ENCODE measurements at regions of chr1 and their contacts with region 1.

Region 1: GRCh38 chr1:161225534-161226319 is at the start of gene TOMM40L:
- DNase-seq: peak; percentile 100
- H3K4me3 ChIP-seq: peak within 1 kb of the TSS; percentile 97
- H3K27ac ChIP-seq: no peak within 1 kb of the TSS
- H3K27me3 ChIP-seq: no peaks in the 10 kb centered on the region
- CTCF ChIP-seq: peak; percentile 76
- polyA plus RNA-seq, gene TOMM40L: 9.3 and 9.9 TPM in 2 replicates

Region 2: DNA sequence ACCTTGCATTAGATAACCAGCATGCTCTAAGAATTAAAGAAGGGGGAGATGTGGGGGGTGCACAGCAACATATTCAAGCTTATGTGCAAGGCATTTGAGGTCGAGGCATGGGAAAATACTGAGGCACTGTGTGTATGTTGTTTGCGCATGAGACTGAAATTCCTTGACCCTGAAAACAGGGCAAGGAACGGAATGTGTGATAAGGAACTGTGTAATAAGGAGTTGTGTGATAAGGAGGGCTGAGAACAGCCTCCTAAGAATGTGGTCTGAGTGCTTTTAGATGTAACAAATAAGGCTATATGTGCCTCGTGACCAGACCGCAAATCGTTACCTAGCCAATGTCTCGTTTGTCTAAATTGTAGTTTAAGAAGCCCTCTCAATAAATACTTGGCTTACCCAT is 314.3 kb before region 1 on chr1:
- CTCF ChIA-PET with region 1: no interaction called
- POLR2A ChIA-PET with region 1: no interaction called
- DNase-seq: no peak
- H3K4me3 ChIP-seq: no peak overlapping the region
- H3K27ac ChIP-seq: no peak overlapping the region
- H3K27me3 ChIP-seq: no peaks in the 10 kb centered on the region
- CTCF ChIP-seq: no peak

Region 3: DNA sequence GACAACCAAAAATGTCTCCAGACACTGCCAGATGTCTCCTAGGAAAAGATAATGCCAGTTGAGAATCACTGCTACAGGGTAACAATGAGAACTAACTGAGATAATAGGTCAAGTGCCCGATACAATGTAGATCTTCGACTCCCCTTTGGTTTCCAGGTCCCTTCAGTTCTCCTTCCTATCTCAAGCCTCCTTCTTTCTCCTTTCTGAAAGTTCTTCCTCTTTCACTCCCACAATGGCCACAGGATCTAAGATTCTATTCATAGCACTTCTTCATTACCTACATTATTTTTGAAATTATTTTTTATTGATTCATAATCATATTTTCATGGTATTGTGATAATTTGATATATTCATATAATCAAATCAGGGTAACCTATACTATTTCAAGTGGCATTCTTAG is 114.2 kb before region 1 on chr1:
- CTCF ChIA-PET with region 1: no interaction called
- POLR2A ChIA-PET with region 1: no interaction called
- DNase-seq: no peak
- H3K4me3 ChIP-seq: no peak overlapping the region
- H3K27ac ChIP-seq: no peak overlapping the region
- H3K27me3 ChIP-seq: no peaks in the 10 kb centered on the region
- CTCF ChIP-seq: no peak

Region 4: GRCh38 chr1:161177112-161177935 is 48.4 kb before region 1 on chr1 and contains the start of gene B4GALT3:
- CTCF ChIA-PET with region 1: interaction called, 27 read pairs
- POLR2A ChIA-PET with region 1: no interaction called
- DNase-seq: no peak
- H3K4me3 ChIP-seq: peak within 1 kb of the TSS; percentile 98
- H3K27ac ChIP-seq: peak within 1 kb of the TSS; percentile 47
- H3K27me3 ChIP-seq: no peaks in the 10 kb centered on the region
- CTCF ChIP-seq: no peak
- polyA plus RNA-seq, gene B4GALT3: 21.8 and 24.7 TPM in 2 replicates

Region 5: DNA sequence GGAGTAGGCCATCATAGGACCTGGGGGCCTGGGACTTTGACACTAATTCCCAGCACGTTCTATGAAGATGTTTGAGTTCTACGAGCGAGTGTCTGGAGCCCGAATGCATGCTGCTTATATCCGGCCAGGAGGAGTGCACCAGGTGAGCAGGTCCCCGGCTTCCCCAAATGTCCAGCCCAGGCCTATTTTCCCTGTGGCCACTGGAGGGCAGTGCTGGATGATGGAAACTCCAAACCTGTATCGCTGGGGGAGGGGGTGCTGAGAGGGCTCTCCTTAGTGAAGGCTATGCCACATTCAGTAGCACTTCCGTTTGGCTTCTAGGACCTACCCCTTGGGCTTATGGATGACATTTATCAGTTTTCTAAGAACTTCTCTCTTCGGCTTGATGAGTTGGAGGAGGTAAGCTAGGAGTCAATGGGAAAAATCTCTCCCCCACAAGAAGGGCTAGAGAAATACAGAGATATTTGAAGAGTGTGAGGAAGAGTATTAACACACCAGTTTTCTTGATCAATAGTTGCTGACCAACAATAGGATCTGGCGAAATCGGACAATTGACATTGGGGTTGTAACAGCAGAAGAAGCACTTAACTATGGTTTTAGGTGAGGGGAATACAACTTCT is 15.8 kb before region 1 on chr1:
- CTCF ChIA-PET with region 1: interaction called, 126 read pairs
- POLR2A ChIA-PET with region 1: interaction called, 3 read pairs
- DNase-seq: no peak
- H3K4me3 ChIP-seq: no peak overlapping the region
- H3K27ac ChIP-seq: no peak overlapping the region
- H3K27me3 ChIP-seq: no peaks in the 10 kb centered on the region
- CTCF ChIP-seq: peak; percentile 93

Region 6: DNA sequence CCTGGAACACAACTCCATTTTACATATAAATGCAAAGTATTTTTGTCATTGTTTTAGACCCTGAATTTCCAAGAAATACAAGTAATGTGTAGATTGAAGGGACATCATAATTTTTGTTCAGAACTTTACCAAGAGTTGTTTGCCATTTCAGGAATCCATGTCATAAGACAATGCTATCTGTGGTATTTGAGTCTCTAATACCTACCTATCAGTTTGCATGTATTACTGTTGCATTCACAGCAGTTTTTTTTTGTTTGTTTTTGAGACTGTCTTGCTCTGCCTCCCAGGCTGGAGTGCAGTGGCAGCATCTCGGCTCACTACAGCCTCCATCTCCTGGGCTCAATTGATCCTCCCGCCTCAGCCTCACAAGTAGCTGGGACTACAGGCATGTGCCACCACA is 66.9 kb after region 1 on chr1:
- CTCF ChIA-PET with region 1: interaction called, 78 read pairs
- POLR2A ChIA-PET with region 1: no interaction called
- DNase-seq: no peak
- H3K4me3 ChIP-seq: no peak overlapping the region
- H3K27ac ChIP-seq: no peak overlapping the region
- H3K27me3 ChIP-seq: no peaks in the 10 kb centered on the region
- CTCF ChIP-seq: no peak

Region 7: GRCh38 chr1:161367684-161368400 is 142.1 kb after region 1 on chr1 and contains the start of gene CFAP126:
- CTCF ChIA-PET with region 1: interaction called, 10 read pairs
- POLR2A ChIA-PET with region 1: no interaction called
- DNase-seq: no peak
- H3K4me3 ChIP-seq: no peak within 1 kb of the TSS
- H3K27ac ChIP-seq: no peak within 1 kb of the TSS
- H3K27me3 ChIP-seq: no peaks in the 10 kb centered on the region
- CTCF ChIP-seq: no peak
- polyA plus RNA-seq, gene CFAP126: not detected in 2 replicates

Region 8: DNA sequence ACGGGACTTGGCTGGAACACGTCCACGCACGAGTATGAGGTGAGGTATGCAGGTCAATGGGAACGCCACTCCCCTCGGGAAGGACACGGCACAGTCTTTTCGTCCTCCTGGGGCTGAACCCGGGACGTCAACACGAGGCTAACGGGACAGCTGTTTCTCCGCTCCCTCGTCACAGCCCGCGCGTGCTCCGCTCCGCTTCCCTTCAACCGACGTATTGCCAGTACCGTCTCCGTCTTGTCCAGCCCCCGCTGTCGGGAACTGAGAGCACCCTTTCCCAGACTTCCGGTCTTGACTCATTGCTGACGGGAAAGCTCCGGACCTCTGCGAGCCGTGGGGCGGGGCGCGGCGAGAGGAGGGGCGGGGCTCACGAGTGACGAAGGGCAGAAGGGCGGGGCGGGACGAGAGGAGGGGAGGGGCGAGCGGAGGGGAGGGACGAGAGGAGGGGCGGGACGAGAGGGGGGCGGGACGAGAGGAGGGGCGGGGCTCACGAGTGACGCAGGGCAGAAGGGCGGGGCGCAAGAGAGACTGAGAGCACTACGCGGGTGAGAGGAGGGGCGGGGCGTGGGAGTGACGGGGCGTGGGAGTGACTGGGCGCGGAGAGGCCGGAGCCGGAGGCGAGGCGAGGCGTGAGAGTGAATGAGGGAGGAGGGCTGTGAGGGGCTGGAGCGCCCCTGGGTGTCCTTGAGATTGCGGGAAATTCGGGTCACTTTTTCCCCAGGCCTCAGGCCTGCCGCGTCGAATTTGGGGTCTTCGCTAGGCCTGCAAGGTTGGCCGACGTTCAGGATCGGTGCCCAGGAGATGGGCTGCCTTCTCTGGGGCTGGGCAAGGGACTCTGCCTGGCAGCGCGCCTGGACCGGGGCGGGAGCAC is 164.2 kb after region 1 on chr1:
- CTCF ChIA-PET with region 1: interaction called, 197 read pairs
- POLR2A ChIA-PET with region 1: no interaction called
- DNase-seq: peak; percentile 96
- H3K4me3 ChIP-seq: peak overlapping the region; percentile 83
- H3K27ac ChIP-seq: peak overlapping the region; percentile 98
- H3K27me3 ChIP-seq: no peaks in the 10 kb centered on the region
- CTCF ChIP-seq: no peak

Measured in AG04450 (cell line).